MCF 10A (cell line): ENCODE measurements at regions of chr17 and their contacts with region 1.

Region 1: DNA sequence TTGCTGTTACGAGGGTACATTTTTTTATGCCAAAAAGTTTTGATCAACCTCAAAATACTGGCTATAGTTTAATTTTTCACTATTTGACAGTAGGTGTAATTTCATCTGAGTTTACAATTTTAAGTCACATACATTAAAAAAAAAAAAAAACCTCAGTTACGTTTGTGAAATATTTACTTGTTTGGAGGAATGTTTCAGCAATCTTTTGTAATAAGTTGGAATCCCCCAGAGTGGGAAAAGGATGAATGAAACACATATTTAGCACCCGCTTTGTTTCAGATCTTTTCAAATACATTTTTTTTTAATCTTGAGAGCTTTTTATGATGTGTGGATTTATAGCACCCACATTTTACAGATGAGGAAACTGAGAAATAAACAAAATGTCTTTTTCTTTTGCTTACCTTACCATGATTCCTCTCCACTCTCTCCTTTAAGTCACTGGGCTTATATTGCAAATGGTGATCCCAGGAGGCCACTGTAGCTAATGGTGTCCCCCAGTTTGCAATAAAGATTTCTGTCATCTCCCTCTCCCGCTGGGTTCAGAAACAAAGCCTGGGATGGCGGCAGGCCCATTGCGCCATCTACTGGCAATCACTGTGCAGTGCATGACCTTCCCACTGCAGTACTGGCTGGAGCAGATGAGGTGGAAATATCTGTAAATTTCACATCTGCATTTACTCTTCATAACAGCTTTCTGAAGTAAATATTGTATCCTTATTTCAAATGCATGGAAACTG is 27.7 kb downstream of the TBC1D3B start:
- DNase-seq: peak; percentile 72
- H3K4me3 Mint-ChIP-seq: no peak overlapping the region
- H3K27ac Mint-ChIP-seq: no peak overlapping the region
- H3K4me1 Mint-ChIP-seq: peaks cover 10% of the 10 kb centered on the region
- H3K27me3 Mint-ChIP-seq: peaks cover 77% of the 10 kb centered on the region
- CTCF ChIP-seq: peak; percentile 99

Region 2: GRCh38 chr17:35915153-35915969 is 233.4 kb before region 1 on chr17:
- CTCF ChIA-PET with region 1: interaction called, 12 read pairs
- POLR2A ChIA-PET with region 1: no interaction called
- intact Hi-C with region 1: no loop called
- DNase-seq: no peak
- H3K4me3 Mint-ChIP-seq: no peak overlapping the region
- H3K27ac Mint-ChIP-seq: no peak overlapping the region
- H3K4me1 Mint-ChIP-seq: no peaks in the 10 kb centered on the region
- H3K27me3 Mint-ChIP-seq: peaks cover 11% of the 10 kb centered on the region
- CTCF ChIP-seq: no peak

Region 3: DNA sequence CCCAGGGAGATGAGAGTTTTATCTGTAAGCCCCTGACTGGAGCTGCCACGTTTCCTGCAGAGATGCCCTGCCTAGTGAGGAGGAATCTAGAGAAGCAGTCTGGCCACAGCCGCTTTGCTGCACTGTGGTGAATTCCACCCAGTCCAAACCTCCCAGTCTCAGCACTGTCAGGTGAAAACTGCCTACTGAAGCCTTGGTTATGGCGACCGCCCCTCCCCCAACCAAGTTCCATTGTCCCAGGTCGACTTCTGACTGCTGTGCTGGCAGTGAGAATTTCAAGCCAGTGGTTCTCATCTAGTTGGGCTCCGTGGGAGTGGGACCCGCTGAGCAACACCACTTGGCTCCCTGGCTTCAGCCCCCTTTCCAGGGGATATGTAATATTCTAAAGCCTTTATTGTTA is 195.0 kb before region 1 on chr17:
- CTCF ChIA-PET with region 1: interaction called, 18 read pairs
- POLR2A ChIA-PET with region 1: interaction called, 3 read pairs
- intact Hi-C with region 1: no loop called
- DNase-seq: no peak
- H3K4me3 Mint-ChIP-seq: no peak overlapping the region
- H3K27ac Mint-ChIP-seq: no peak overlapping the region
- H3K4me1 Mint-ChIP-seq: no peaks in the 10 kb centered on the region
- H3K27me3 Mint-ChIP-seq: peaks cover 59% of the 10 kb centered on the region
- CTCF ChIP-seq: no peak

Region 4: DNA sequence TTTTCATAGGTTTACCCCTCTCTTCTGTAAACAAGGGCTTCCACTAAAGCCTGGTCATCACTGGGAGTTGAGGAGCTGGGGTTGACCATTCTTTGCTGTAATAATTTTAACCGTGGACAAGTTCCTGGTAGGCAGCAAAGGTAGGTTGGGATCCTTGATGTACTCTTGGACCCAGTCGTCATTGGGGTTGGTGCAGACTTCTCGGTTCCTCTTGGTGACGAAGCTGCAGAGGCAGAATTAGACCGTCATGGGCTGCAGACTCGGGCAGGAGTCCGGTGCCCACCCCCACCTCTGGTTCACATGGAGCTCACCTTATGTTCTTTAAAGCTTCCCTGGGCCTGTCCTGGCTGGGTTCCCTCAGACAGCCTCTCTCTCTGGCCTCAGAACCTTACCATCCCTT is 171.2 kb before region 1 on chr17:
- CTCF ChIA-PET with region 1: interaction called, 284 read pairs
- POLR2A ChIA-PET with region 1: interaction called, 4 read pairs
- intact Hi-C with region 1: no loop called
- DNase-seq: no peak
- H3K4me3 Mint-ChIP-seq: no peak overlapping the region
- H3K27ac Mint-ChIP-seq: no peak overlapping the region
- H3K4me1 Mint-ChIP-seq: peaks cover 7% of the 10 kb centered on the region
- H3K27me3 Mint-ChIP-seq: no peaks in the 10 kb centered on the region
- CTCF ChIP-seq: no peak

Region 5: DNA sequence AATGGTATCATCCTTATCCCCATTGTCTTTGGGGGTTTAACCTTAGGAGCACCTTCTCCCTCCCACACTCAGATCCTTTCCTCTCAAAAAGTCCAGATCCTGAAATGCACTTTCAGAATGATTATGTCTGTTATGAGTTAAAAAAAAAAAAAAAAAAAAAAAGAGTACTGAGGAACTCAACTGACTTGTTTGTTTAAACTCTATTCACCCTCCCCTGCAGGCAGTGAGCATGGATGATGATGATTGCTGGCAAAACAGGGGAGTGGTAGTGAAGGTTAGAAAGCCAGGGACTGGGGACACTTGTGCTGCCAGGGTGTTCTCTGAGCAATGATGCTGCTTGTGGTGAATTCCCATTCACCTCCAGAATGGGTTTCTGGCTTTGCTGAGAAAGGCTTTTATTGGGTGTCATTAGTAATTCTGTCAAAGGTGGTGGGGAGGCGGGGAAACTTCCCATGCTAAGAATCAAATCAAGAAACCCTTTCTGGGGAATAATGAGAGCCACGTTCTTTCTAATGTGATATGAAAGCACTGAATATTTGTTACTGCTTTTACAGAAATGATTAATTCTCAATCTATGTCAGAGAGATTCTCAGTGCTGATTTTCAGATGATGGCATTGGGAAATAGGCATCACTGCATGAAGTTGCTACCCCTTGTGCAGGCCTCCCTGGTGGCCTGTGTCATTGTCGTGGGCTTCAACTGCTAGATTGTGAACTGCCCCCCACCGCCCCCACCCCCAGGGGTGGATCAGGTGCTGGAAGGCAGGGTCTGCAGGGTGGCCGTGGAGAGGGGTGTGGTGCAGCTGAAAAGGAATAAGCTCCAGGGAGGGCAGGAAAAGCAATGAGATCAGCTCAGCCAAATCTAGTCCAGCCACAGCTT is 31.0 kb before region 1 on chr17:
- CTCF ChIA-PET with region 1: interaction called, 109 read pairs
- POLR2A ChIA-PET with region 1: no interaction called
- intact Hi-C with region 1: no loop called
- DNase-seq: no peak
- H3K4me3 Mint-ChIP-seq: no peak overlapping the region
- H3K27ac Mint-ChIP-seq: no peak overlapping the region
- H3K4me1 Mint-ChIP-seq: peaks cover 6% of the 10 kb centered on the region
- H3K27me3 Mint-ChIP-seq: peaks cover 44% of the 10 kb centered on the region
- CTCF ChIP-seq: no peak

Region 6: GRCh38 chr17:36486204-36487194 is 337.8 kb after region 1 on chr17 and contains the start of gene ZNHIT3:
- CTCF ChIA-PET with region 1: interaction called, 15 read pairs
- POLR2A ChIA-PET with region 1: interaction called, 3 read pairs
- intact Hi-C with region 1: no loop called
- DNase-seq: peak; percentile 94
- H3K4me3 Mint-ChIP-seq: peak within 1 kb of the TSS; percentile 86
- H3K27ac Mint-ChIP-seq: peak within 1 kb of the TSS; percentile 92
- H3K4me1 Mint-ChIP-seq: peaks cover 6% of the 10 kb centered on the region
- H3K27me3 Mint-ChIP-seq: peaks cover 10% of the 10 kb centered on the region
- CTCF ChIP-seq: no peak
- total RNA-seq, gene ZNHIT3: 33.9 and 35.5 TPM in 2 replicates